Aorta (tissue), 5 donors: ENCODE measurements at regions of chr10 and their contacts with region 1.

Region 1: DNA sequence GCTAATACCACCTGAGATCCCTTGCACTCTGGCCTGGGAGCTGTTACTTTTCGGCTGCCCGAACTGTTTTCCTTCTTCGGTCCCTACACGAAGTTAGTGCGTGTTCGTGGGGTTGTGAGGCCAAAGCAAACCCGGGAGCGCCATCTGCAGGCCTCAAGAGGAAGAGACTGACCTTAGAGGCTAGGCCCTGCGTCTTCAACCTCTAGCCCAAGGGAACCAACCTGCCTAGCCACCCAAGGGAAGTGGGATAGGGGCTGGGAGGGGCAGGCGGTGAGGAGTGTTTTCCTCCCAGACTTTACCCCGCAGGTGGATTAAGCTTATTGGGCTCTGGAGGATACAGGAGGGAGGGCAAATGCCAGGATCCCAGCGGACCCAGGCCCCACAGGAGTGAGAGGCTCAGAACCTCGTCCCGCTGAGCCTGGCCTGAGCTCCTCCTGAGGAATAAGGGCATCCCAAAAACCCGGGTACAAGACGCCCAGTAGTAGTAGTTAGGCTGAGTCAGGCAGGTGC is 1.7 kb upstream of the PAX2 start:
- DNase-seq: no peak
- ATAC-seq: no peak
- H3K4me3 ChIP-seq: no peak overlapping the region
- H3K27ac ChIP-seq: no peak overlapping the region
- H3K4me1 ChIP-seq: no peaks in the 10 kb centered on the region
- H3K27me3 ChIP-seq: no peaks in the 10 kb centered on the region

Region 2: GRCh38 chr10:100670828-100671479 is 72.7 kb before region 1 on chr10:
- intact Hi-C with region 1: loop called in 1 of 2 experiments (anchors 2 kb)
- DNase-seq: peak in 1 of 2 donors; percentile 78
- ATAC-seq: no peak
- H3K4me3 ChIP-seq: no peak overlapping the region
- H3K27ac ChIP-seq: no peak overlapping the region
- H3K4me1 ChIP-seq: no peaks in the 10 kb centered on the region
- H3K27me3 ChIP-seq: no peaks in the 10 kb centered on the region

Region 3: GRCh38 chr10:100697070-100697469 is 46.6 kb before region 1 on chr10:
- intact Hi-C with region 1: no loop called
- DNase-seq: no peak
- ATAC-seq: no peak
- H3K4me3 ChIP-seq: no peak overlapping the region
- H3K27ac ChIP-seq: no peak overlapping the region
- H3K4me1 ChIP-seq: no peaks in the 10 kb centered on the region
- H3K27me3 ChIP-seq: no peaks in the 10 kb centered on the region